Adrenal gland (tissue), 19 donors: ENCODE measurements at regions of chr15 and their contacts with region 1.

Region 1: GRCh38 chr15:22872936-22873701 is 34.7 kb downstream of the NIPA2 start:
- DNase-seq: no peak
- H3K4me3 ChIP-seq: no peak overlapping the region
- H3K27ac ChIP-seq: no peak overlapping the region
- H3K4me1 ChIP-seq: no peaks in the 10 kb centered on the region
- H3K27me3 ChIP-seq: no peaks in the 10 kb centered on the region
- CTCF ChIP-seq: no peak
- POLR2A ChIP-seq: no peak

Region 2: DNA sequence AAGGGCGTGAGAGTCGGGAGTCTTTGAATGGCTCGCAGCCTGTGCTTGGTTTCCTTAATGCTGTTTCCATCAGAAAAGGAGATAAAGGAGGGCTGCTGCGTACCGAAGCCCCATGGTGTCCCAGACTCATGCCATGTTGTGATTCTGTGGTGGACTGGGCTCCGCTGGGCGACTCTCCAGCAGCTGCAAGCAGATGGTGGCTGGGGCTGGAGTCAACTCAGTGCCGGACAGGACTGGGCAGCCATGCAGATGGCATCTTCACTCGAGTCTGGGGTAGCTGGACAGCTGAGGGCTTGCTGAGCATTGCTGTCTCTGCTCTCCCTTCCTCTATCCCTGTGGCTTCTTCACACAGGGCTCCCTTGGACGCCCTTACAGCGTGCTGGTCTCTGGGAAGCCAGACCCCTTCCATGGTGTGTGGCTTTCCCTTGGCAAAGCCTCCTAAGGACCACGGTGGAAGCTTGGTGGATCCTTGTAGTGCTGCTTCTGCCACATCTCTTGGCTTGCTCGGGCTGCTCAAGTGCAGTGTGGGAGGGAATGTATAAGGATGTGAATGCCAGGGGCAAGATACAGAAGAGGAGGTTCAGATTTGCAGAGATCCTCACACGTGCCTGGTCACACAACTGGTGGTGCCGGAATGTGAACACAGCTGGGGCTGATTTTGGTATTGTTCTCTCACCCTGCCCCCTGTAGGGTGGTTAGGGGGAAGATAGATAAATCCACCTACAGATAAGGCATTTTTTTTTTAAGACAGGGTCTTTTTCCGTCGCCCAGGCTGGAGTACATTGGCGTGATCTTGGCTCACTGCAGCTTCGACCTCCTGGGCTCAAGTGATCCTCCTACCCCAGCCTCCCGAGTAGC is 77.7 kb before region 1 on chr15:
- intact Hi-C with region 1: loop called in 1 of 2 experiments (anchors 10 kb)
- DNase-seq: no peak
- H3K4me3 ChIP-seq: no peak overlapping the region
- H3K27ac ChIP-seq: no peak overlapping the region
- H3K4me1 ChIP-seq: no peaks in the 10 kb centered on the region
- H3K27me3 ChIP-seq: no peaks in the 10 kb centered on the region
- CTCF ChIP-seq: no peak
- POLR2A ChIP-seq: no peak

Region 3: GRCh38 chr15:22922003-22922402 is 48.9 kb after region 1 on chr15:
- intact Hi-C with region 1: loop called in 1 of 2 experiments (anchors 10 kb)
- DNase-seq: no peak
- H3K4me3 ChIP-seq: no peak overlapping the region
- H3K27ac ChIP-seq: no peak overlapping the region
- H3K4me1 ChIP-seq: peaks cover 7 to 9% of the 10 kb centered on the region in 2 donors
- H3K27me3 ChIP-seq: no peaks in the 10 kb centered on the region
- CTCF ChIP-seq: no peak
- POLR2A ChIP-seq: no peak

Region 4: DNA sequence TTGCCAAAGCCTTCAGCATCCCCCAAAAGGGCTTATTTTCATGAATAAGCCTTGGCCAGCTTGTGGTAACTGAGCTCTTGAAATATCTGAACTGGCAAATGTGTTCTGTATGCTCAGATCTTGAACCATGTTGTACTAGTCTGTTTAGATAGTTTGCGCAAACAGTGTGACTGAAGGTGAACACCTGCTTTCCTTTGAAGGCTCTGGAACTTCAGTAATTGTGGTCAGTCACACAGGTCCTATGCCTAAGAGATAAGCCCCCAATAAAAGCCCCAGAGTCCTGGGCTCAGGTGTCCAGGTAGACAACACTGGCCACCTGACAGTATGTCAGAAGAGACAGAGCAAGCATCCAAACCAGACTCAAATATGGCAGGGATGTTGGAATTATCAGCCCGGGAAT is 160.9 kb after region 1 on chr15:
- intact Hi-C with region 1: no loop called
- DNase-seq: no peak
- H3K4me3 ChIP-seq: no peak overlapping the region
- H3K27ac ChIP-seq: no peak overlapping the region
- H3K4me1 ChIP-seq: peaks cover 6 to 16% of the 10 kb centered on the region in 2 donors
- H3K27me3 ChIP-seq: no peaks in the 10 kb centered on the region
- CTCF ChIP-seq: no peak
- POLR2A ChIP-seq: no peak